ENCODE measurements at regions of chr20 and their contacts with region 1.

Region 1: GRCh38 chr20:41411391-41411847 is 44.8 kb upstream of the EMILIN3 start:
- DNase-seq: no peak
- H3K4me3 ChIP-seq: no peak overlapping the region
- H3K27ac ChIP-seq: no peak overlapping the region
- H3K4me1 ChIP-seq: no peaks in the 10 kb centered on the region
- H3K27me3 ChIP-seq: no peaks in the 10 kb centered on the region
- CTCF ChIP-seq: peak in 1 of 3 experiments; percentile 19; a peak in 2 of 4 replicates
- EP300 ChIP-seq: no peak
- POLR2A ChIP-seq: no peak
- RAD21 ChIP-seq: no peak; a peak in 2 of 4 replicates

Region 2: DNA sequence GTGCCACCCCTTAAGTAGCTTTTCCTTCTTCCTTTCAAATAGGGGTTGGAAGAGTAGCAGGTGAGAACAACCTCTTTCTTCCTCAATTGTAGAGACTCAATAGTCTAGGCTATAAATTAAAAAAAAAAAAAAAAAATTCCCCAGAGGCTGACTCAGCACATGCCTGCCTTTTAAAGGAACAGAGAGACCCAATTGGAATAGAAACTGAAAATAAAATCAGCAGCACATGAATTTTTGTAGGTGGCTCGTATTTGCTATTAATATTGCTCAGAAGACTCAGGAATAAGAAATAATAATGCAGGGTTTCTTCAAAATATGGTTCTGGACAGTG is 363.5 kb before region 1 on chr20:
- CTCF ChIA-PET with region 1: no interaction called
- POLR2A ChIA-PET with region 1: no interaction called
- DNase-seq: no peak
- H3K4me3 ChIP-seq: peak overlapping the region in 1 of 4 experiments; percentile 3; a peak in 1 of 8 replicates
- H3K27ac ChIP-seq: no peak overlapping the region
- H3K4me1 ChIP-seq: peaks cover 5 to 21% (median 9%) of the 10 kb centered on the region in 4 experiments; a peak in 4 of 7 replicates
- H3K27me3 ChIP-seq: no peaks in the 10 kb centered on the region
- CTCF ChIP-seq: no peak
- EP300 ChIP-seq: no peak
- POLR2A ChIP-seq: no peak
- RAD21 ChIP-seq: no peak

Region 3: DNA sequence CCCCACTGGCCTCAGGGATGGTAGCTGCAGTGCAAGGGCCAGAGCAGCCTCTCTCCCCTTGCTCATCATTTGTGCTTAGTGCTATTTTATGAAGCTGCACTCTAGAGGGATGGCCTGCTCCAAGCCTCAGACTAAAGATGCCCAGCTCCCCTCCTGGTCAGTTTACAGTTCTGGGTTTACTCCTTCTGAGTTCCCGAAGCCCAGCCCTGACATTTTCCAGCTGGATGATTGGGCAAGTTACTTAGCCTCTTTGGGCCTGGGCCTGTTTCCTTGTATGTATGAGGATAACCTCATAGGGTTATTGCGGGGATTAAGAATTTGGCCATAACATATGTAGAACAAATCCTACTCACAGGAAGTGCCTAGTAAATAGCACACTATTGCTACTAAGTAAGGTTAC is 13.0 kb before region 1 on chr20:
- CTCF ChIA-PET with region 1: interaction called, 14 read pairs
- POLR2A ChIA-PET with region 1: interaction called, 3 read pairs
- DNase-seq: no peak
- H3K4me3 ChIP-seq: no peak overlapping the region
- H3K27ac ChIP-seq: no peak overlapping the region
- H3K4me1 ChIP-seq: peaks cover 0 to 9% (median 6%) of the 10 kb centered on the region in 4 experiments; a peak in 5 of 7 replicates
- H3K27me3 ChIP-seq: no peaks in the 10 kb centered on the region
- CTCF ChIP-seq: no peak
- EP300 ChIP-seq: no peak
- POLR2A ChIP-seq: no peak
- RAD21 ChIP-seq: no peak

Region 4: DNA sequence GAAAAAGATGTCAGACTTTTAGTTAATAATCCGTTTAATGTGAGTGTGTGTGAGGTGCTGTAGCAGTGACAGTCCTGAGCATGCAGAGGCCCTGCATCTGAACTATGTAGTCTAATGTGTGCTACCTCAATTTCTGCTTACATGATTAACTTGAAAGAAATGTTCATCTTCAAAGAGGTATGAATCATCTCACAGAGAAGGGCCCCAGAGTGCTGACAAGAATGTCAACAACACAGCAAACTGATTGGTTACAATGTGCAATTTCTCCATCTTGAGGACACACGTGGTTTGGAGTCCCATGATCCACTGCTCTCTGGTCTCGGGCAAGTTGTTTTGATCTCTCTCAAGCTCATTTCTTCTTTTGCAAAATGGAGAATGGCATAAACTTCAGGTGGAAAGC is 16.9 kb after region 1 on chr20:
- CTCF ChIA-PET with region 1: interaction called, 10 read pairs
- POLR2A ChIA-PET with region 1: no interaction called
- DNase-seq: no peak
- H3K4me3 ChIP-seq: no peak overlapping the region
- H3K27ac ChIP-seq: no peak overlapping the region
- H3K4me1 ChIP-seq: no peaks in the 10 kb centered on the region
- H3K27me3 ChIP-seq: no peaks in the 10 kb centered on the region
- CTCF ChIP-seq: no peak
- EP300 ChIP-seq: no peak
- POLR2A ChIP-seq: no peak
- RAD21 ChIP-seq: no peak

Region 5: DNA sequence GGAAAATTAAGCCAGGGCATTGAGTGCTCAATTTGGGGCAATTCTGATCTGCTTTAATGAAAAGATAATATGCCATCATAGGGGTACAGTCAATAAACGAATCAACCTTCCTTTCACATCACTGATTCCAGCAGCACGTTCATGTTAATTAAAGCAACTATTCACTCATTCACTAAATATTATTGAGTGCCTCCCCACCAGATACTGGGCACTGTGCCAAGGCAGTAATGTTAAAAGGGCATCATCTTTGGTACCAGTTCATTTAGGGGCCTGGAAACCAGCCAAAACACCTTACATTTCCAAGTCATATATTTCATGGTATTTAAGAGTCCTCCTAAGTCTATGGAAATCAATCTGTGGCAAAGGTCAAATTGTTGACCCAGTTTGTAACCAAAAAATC is 76.5 kb after region 1 on chr20:
- CTCF ChIA-PET with region 1: no interaction called
- POLR2A ChIA-PET with region 1: no interaction called
- DNase-seq: no peak
- H3K4me3 ChIP-seq: no peak overlapping the region
- H3K27ac ChIP-seq: no peak overlapping the region
- H3K4me1 ChIP-seq: no peaks in the 10 kb centered on the region
- H3K27me3 ChIP-seq: no peaks in the 10 kb centered on the region
- CTCF ChIP-seq: no peak
- EP300 ChIP-seq: no peak
- POLR2A ChIP-seq: no peak
- RAD21 ChIP-seq: no peak

Measured in H1 (cell line).